B cell (primary cell): ENCODE measurements at regions of chr4 and their contacts with region 1.

Region 1: GRCh38 chr4:83083925-83084475 is 30.5 kb downstream of the PLAC8 start:
- DNase-seq: peak; percentile 83
- ATAC-seq: peak; percentile 98
- H3K4me3 ChIP-seq: peak overlapping the region in 2 of 5 experiments; percentile 15 to 32
- H3K4me3 Mint-ChIP-seq: peak overlapping the region; percentile 50
- H3K27ac ChIP-seq: peak overlapping the region; percentile 77 to 93
- H3K27ac Mint-ChIP-seq: peak overlapping the region; percentile 92
- H3K4me1 ChIP-seq: peaks cover 26 to 37% of the 10 kb centered on the region in 2 donors
- H3K4me1 Mint-ChIP-seq: peaks cover 44% of the 10 kb centered on the region
- H3K27me3 ChIP-seq: no peaks in the 10 kb centered on the region
- H3K27me3 Mint-ChIP-seq: no peaks in the 10 kb centered on the region
- CTCF ChIP-seq: peak; percentile 58

Region 2: GRCh38 chr4:82123934-82124333 is 960.1 kb before region 1 on chr4:
- CTCF ChIA-PET with region 1: no interaction called
- POLR2A ChIA-PET with region 1: no interaction called
- intact Hi-C with region 1: no loop called
- DNase-seq: peak; percentile 4
- ATAC-seq: no peak
- H3K4me3 ChIP-seq: no peak overlapping the region
- H3K4me3 Mint-ChIP-seq: no peak overlapping the region
- H3K27ac ChIP-seq: no peak overlapping the region
- H3K27ac Mint-ChIP-seq: no peak overlapping the region
- H3K4me1 ChIP-seq: no peaks in the 10 kb centered on the region
- H3K4me1 Mint-ChIP-seq: no peaks in the 10 kb centered on the region
- H3K27me3 ChIP-seq: no peaks in the 10 kb centered on the region
- H3K27me3 Mint-ChIP-seq: peaks cover 7% of the 10 kb centered on the region
- CTCF ChIP-seq: no peak

Region 3: DNA sequence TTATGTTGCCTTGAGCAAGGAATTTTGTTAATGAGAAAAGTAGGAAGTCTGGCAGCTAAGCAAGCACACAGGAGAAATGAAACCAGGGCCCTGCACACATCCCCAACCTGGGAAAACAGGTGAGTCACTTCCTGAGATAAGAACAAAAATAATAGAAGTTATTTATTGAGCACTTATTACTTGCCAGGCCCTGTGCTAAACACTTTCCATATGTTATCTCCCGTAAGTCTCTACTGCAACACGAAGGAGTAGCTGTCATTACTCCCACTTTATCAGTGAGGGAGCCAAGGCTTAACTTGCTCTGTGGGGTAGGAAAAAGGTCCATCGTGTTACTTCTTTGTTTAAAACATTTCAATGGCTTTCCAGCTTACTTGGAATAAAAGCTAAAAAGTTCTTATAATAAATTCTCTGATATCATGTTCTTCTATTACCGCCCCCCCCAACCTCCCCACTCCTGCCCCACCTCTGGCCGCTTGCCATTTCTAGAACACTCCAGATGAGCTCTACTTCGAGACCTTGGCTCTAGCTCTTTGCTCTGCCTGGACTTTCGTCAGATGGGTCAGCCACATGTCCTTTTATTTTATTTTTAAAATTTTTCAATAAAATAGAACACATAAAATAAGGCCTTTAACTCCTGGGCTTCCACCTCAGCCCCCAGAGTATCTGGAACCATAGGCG is 66.8 kb after region 1 on chr4:
- CTCF ChIA-PET with region 1: interaction called, 6 read pairs
- POLR2A ChIA-PET with region 1: no interaction called
- intact Hi-C with region 1: loop called (anchors 5 kb)
- DNase-seq: no peak
- ATAC-seq: no peak
- H3K4me3 ChIP-seq: no peak overlapping the region
- H3K4me3 Mint-ChIP-seq: no peak overlapping the region
- H3K27ac ChIP-seq: no peak overlapping the region
- H3K27ac Mint-ChIP-seq: no peak overlapping the region
- H3K4me1 ChIP-seq: peaks cover 31 to 33% of the 10 kb centered on the region in 2 donors
- H3K4me1 Mint-ChIP-seq: peaks cover 42% of the 10 kb centered on the region
- H3K27me3 ChIP-seq: no peaks in the 10 kb centered on the region
- H3K27me3 Mint-ChIP-seq: no peaks in the 10 kb centered on the region
- CTCF ChIP-seq: no peak

Region 4: DNA sequence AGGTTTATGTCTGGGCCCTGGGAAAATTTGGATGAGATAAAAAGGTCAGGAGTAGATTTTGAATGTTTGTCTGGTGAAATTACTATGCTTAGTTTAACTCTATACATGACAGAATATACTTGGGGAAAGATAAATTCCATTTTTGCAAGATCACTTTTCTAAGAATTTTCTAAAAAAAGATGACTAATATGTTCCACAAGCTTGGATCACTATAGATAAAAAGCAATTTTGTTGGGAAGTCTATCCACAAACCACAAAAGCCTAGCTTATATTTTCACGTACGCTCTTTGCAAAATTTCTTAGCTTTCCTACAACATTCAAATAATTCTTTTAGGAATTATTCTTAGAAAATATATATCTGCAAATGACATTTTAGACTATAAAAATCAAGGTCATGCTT is 221.2 kb after region 1 on chr4:
- CTCF ChIA-PET with region 1: no interaction called
- POLR2A ChIA-PET with region 1: no interaction called
- intact Hi-C with region 1: no loop called
- DNase-seq: no peak
- ATAC-seq: no peak
- H3K4me3 ChIP-seq: no peak overlapping the region
- H3K4me3 Mint-ChIP-seq: no peak overlapping the region
- H3K27ac ChIP-seq: no peak overlapping the region
- H3K27ac Mint-ChIP-seq: no peak overlapping the region
- H3K4me1 ChIP-seq: no peaks in the 10 kb centered on the region
- H3K4me1 Mint-ChIP-seq: peaks cover 2% of the 10 kb centered on the region
- H3K27me3 ChIP-seq: no peaks in the 10 kb centered on the region
- H3K27me3 Mint-ChIP-seq: no peaks in the 10 kb centered on the region
- CTCF ChIP-seq: no peak